HepG2 (cell line): ENCODE measurements at regions of chr2 and their contacts with region 1.

Region 1: DNA sequence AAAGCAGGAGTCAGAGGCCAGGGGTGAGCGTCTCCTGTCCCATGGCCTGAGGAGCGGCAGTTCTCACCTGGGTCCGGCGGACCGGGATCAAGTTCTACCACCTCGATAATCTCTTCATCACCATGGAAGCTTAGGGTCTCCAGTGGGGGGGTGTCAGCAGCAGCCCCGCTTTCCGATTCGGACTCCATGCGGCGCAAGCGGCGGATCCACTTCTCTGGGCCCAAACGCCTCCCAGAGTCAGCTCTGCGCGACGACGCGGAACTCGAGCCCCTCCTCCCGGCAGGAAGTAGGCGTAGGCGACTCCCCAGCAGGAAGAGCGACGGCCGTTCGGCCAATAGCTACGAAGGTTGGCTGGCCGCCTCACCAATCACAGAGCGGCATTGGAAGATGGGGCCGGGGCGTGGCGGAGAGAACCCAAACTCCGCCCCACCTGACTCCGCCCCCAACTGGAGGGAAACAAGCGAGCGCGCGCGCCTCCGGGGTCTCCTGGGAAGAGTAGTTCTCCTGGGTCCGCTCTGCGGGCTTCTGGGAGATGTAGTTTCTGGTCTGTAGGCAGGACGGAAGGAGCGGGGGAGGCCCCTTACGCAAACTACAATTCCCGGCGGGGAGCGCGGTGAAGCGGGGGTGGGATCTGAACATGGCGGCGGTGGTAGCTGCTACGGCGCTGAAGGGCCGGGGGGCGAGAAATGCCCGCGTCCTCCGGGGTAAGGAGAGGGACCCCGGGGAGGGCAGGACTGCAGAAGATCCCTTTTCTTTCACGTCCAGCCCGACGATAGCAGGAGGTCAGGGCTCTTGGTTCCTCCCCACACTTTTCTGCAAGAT is at the starts of genes AAMP and PNKD:
- DNase-seq: peak; percentile 100
- ATAC-seq: peak; percentile 87
- H3K4me3 ChIP-seq: peak within 1 kb of the TSS; percentile 78 to 97 (median 96)
- H3K27ac ChIP-seq: peak within 1 kb of the TSS; percentile 80
- H3K4me1 ChIP-seq: peaks cover 58% of the 10 kb centered on the region
- H3K27me3 ChIP-seq: no peaks in the 10 kb centered on the region; a peak in 1 of 5 replicates
- CTCF ChIP-seq: peak; percentile 54
- EP300 ChIP-seq: 0 out of 4 replicates have a peak, but pooled peaks of 1 of the 2 experiments have one; percentile 47
- POLR2A ChIP-seq: peak; percentile 84 to 94
- RAD21 ChIP-seq: peak; percentile 40
- total RNA-seq, gene AAMP: 186 and 241 TPM in 2 replicates
- total RNA-seq, gene PNKD: 50.0 and 55.9 TPM in 2 replicates

Region 2: DNA sequence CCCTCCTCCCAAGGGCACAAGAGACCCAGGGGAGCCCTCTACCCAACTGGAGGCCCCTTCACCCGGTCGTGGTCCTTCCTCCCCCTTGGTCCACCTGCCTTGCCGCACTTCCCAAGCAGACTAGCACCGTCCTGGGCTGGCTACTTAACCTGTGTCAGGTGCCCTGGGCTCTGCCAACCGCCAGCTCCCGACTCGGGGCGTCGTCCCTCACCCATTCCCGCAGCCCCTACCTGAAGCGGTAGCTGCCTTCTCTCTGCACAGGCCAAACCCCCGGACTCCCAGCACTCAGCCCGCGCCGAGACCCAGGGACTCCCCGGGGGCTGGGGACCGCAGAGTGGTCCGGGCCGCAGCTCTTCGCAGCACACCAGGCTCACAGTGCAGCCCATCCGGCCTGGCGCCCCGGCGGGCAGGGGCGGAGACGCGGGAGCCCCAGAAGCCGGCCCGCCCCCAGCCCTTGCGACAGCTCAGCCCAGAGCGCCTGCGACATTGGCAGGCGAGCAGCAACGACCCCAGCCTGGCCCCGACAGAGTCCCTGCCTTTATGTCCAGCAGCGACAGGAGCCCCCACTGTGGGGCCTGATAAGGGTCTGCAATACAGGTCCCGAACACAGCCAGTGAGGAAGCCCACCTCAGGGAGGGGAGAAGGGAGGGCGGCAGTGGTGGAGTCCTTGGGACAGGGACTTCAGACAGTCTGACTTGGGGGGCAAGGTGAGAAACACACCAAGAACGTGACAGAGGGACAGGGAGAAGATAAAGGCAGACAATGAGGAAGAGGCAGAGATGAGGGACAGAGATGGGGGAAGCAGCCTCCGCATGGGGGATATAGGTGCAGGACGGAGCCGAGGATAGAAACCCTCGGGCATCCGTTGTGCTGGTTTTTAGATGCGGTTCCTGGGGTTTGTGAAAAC is 236.3 kb before region 1 on chr2:
- CTCF ChIA-PET with region 1: no interaction called
- POLR2A ChIA-PET with region 1: no interaction called
- in situ Hi-C with region 1: no loop called
- intact Hi-C with region 1: no loop called
- DNase-seq: no peak
- ATAC-seq: peak; percentile 51
- H3K4me3 ChIP-seq: no peak overlapping the region; a peak in 1 of 6 replicates
- H3K27ac ChIP-seq: no peak overlapping the region
- H3K4me1 ChIP-seq: peaks cover 8% of the 10 kb centered on the region
- H3K27me3 ChIP-seq: peaks cover 11 to 69% of the 10 kb centered on the region in 2 experiments
- CTCF ChIP-seq: no peak
- EP300 ChIP-seq: no peak
- POLR2A ChIP-seq: no peak
- RAD21 ChIP-seq: no peak

Region 3: DNA sequence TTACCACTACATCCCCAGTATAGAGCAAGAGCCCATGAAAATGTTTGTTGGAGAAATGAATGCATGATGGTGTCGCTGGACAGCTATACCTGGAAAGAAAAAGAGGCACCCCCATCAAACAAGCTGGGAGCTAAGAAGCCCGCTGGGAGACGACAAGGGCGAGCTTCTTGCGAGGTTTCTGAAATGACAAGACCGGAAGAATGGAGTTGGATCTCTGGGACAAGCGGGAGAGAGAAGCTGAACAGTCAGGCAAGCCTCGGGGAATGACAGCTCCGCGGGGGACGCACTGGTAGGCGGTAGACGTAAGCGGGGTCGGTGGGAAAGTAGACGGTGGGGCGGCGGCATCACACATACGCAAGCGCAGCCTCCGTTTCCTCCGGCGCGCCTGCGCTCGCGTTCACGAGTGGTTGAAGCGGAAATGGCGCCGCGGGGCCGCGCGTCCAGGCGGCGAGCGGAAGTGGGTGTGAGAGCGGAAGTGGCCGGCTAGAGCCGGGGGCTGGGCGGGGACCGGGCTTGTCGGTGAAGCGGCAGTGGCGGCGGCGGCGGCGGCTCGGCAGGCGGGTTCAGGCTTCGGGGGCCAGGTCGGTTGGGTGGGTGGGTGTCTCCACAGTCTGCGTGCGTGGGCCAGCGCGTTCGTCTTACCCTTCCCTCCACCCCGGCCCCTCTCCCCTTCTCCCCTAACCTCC is 53.3 kb before region 1 on chr2 and contains the start of gene ARPC2:
- CTCF ChIA-PET with region 1: no interaction called
- POLR2A ChIA-PET with region 1: interaction called, 9 read pairs
- in situ Hi-C with region 1: no loop called
- intact Hi-C with region 1: loop called (anchors 5 kb)
- DNase-seq: peak; percentile 88
- ATAC-seq: peak; percentile 95
- H3K4me3 ChIP-seq: peak within 1 kb of the TSS; percentile 87 to 96 (median 93)
- H3K27ac ChIP-seq: peak within 1 kb of the TSS; percentile 70
- H3K4me1 ChIP-seq: peaks cover 46% of the 10 kb centered on the region
- H3K27me3 ChIP-seq: no peaks in the 10 kb centered on the region; a peak in 1 of 5 replicates
- CTCF ChIP-seq: peak; percentile 34
- EP300 ChIP-seq: peak in 1 of 2 experiments; percentile 40; a peak in 2 of 4 replicates
- POLR2A ChIP-seq: peak; percentile 81 to 90
- RAD21 ChIP-seq: peak; percentile 17; the same call in 1 of the 2 replicates
- total RNA-seq, gene ARPC2: 168 and 201 TPM in 2 replicates

Region 4: GRCh38 chr2:218286570-218287459 is 16.7 kb after region 1 on chr2:
- CTCF ChIA-PET with region 1: interaction called, 5 read pairs
- POLR2A ChIA-PET with region 1: interaction called, 121 read pairs
- in situ Hi-C with region 1: no loop called
- intact Hi-C with region 1: loop called (anchors 1 kb)
- DNase-seq: peak; percentile 96
- ATAC-seq: peak; percentile 67
- H3K4me3 ChIP-seq: peak overlapping the region in 1 of 3 experiments; percentile 43; a peak in 2 of 6 replicates
- H3K27ac ChIP-seq: peak overlapping the region; percentile 64
- H3K4me1 ChIP-seq: peaks cover 76% of the 10 kb centered on the region
- H3K27me3 ChIP-seq: no peaks in the 10 kb centered on the region; a peak in 1 of 5 replicates
- CTCF ChIP-seq: no peak
- EP300 ChIP-seq: peak in 1 of 2 experiments; percentile 50; a peak in 1 of 4 replicates
- POLR2A ChIP-seq: no peak; a peak in 1 of 4 replicates
- RAD21 ChIP-seq: no peak

Region 5: GRCh38 chr2:218360447-218360846 is 90.3 kb after region 1 on chr2:
- CTCF ChIA-PET with region 1: interaction called, 7 read pairs
- POLR2A ChIA-PET with region 1: interaction called, 5 read pairs
- in situ Hi-C with region 1: no loop called
- intact Hi-C with region 1: loop called (anchors 1 kb)
- DNase-seq: no peak
- ATAC-seq: no peak
- H3K4me3 ChIP-seq: no peak overlapping the region
- H3K27ac ChIP-seq: no peak overlapping the region
- H3K4me1 ChIP-seq: peaks cover 65% of the 10 kb centered on the region
- H3K27me3 ChIP-seq: no peaks in the 10 kb centered on the region; a peak in 3 of 5 replicates
- CTCF ChIP-seq: no peak
- EP300 ChIP-seq: no peak
- POLR2A ChIP-seq: no peak
- RAD21 ChIP-seq: no peak

Region 6: GRCh38 chr2:218466016-218466521 is 196.0 kb after region 1 on chr2:
- CTCF ChIA-PET with region 1: interaction called, 7 read pairs
- POLR2A ChIA-PET with region 1: no interaction called
- in situ Hi-C with region 1: loop called (anchors 10 kb)
- intact Hi-C with region 1: no loop called
- DNase-seq: peak; percentile 34
- ATAC-seq: peak; percentile 69
- H3K4me3 ChIP-seq: no peak overlapping the region
- H3K27ac ChIP-seq: no peak overlapping the region
- H3K4me1 ChIP-seq: 0 out of 2 replicates have a peak, but pooled peaks cover 3% of the 10 kb centered on the region
- H3K27me3 ChIP-seq: no peaks in the 10 kb centered on the region
- CTCF ChIP-seq: peak; percentile 68
- EP300 ChIP-seq: no peak
- POLR2A ChIP-seq: no peak
- RAD21 ChIP-seq: no peak